AG04450 (cell line): ENCODE measurements at regions of chr3 and their contacts with region 1.

Region 1: GRCh38 chr3:49199239-49199899 is 28.0 kb downstream of the KLHDC8B start:
- DNase-seq: peak; percentile 30
- H3K4me3 ChIP-seq: peak overlapping the region; percentile 56
- H3K27ac ChIP-seq: peak overlapping the region; percentile 70
- H3K27me3 ChIP-seq: no peaks in the 10 kb centered on the region
- CTCF ChIP-seq: no peak

Region 2: DNA sequence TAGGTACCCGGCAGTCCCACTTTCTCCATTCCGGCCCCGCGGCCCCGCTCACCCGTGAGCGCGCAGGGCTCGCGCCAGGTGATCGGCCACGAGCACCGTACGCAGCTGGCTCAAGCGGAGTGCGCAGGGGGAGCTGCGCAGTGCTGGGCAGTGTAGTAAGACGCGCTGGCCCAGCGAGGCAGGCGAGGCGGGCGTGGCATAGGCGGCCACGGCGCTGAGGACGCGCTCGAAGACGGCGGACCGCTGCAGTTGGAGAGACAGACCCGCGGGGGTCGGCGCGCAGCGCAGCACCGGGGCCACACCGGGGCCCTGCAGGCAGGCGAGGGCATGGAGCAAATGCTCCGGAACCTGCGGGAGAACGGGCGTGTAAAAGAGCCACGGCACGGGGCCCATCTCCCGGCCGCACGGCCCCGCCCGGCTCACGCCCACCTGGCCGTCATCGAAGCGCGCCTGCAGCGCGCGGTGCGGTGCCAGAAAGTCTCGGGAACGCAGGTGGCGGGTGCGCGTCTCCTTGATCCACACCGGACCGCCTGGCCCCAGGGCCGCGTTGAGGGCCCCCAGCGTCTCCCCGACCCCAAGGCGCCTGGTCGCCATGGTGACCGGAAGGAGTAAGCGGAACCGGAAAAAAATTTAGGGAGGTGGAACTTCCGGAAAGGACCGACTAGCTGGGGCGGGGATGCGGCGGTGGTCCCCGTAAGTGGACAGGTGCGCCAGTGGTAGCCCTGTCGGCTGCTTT is 181.2 kb before region 1 on chr3 and contains the start of gene DALRD3:
- CTCF ChIA-PET with region 1: no interaction called
- POLR2A ChIA-PET with region 1: no interaction called
- DNase-seq: no peak
- H3K4me3 ChIP-seq: peak within 1 kb of the TSS; percentile 80
- H3K27ac ChIP-seq: peak within 1 kb of the TSS; percentile 39
- H3K27me3 ChIP-seq: no peaks in the 10 kb centered on the region
- CTCF ChIP-seq: no peak
- polyA plus RNA-seq, gene DALRD3: 42.4 and 55.6 TPM in 2 replicates

Region 3: GRCh38 chr3:49296781-49297411 is 97.5 kb after region 1 on chr3:
- CTCF ChIA-PET with region 1: no interaction called
- POLR2A ChIA-PET with region 1: no interaction called
- DNase-seq: no peak
- H3K4me3 ChIP-seq: no peak overlapping the region
- H3K27ac ChIP-seq: no peak overlapping the region
- H3K27me3 ChIP-seq: no peaks in the 10 kb centered on the region
- CTCF ChIP-seq: no peak

Region 4: DNA sequence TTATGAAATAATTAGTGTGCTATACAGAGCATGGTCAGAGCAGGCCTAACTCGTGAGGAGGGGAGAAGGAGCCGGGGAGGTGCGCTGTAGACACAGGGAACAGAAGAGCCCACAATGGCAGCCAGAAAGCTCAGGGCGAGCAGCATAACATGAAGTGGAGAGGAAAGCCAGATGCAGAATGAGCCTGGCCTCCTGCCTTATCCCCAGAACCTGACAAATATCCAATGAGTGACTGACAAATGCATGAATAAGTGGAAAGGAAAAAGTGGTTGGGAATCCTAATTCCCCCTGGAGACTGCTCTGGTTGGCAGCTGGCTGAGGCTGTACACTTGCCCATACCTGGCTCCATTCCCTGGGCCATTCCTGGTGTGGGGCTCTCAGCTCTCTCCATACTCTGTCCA is 713.5 kb after region 1 on chr3:
- CTCF ChIA-PET with region 1: no interaction called
- POLR2A ChIA-PET with region 1: interaction called, 10 read pairs
- DNase-seq: no peak
- H3K4me3 ChIP-seq: no peak overlapping the region
- H3K27ac ChIP-seq: no peak overlapping the region
- H3K27me3 ChIP-seq: no peaks in the 10 kb centered on the region
- CTCF ChIP-seq: no peak